Ascending aorta (tissue), 2 donors: ENCODE measurements at regions of chr11 and their contacts with region 1.

Region 1: DNA sequence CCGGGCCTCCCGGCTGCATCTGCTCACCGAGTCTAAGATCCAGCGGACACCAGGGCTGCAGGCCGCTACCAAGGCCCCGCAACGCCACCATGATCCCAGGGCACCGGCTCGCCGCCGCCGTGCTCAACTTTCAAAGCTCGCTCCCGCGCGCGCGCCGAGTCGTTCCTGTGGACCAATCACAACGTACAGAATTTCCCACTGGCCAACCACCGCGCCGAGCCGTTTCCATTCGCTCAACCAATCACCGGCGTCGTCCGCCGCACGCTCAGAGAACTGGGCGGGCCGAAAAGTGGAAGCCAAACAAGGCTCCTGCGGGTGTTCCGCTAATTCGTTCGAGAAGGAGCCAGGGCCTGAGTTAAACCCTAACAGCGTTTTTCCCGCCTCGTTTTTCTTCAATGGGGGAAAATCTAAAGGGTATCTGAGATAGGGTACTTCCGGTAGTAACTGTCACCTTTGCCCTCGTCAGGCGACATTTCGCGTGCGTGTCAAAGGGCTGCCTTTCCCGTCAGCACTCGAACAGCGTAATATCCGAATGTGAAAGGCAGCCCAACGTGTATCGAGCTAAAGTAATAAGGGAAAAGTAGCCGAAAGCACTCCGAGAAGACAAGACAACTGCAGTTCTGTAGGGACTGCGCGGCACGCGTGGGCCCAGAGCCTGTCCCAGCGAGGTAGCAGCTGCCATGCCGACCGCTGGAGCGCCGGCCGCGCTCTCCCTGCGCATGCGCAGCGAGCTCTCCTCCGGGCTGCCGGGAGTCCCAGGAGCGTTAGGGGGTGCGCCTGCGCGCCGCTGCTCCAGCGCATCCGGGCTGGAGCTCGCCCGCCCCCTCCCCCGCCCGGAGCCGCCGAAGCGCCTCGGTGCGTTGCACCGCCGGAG is at the starts of genes NCAPD3 and VPS26B:
- DNase-seq: peak; percentile 88 to 98
- H3K4me3 ChIP-seq: peak within 1 kb of the TSS; percentile 74 to 92
- H3K27ac ChIP-seq: peak within 1 kb of the TSS; percentile 86 to 91
- H3K4me1 ChIP-seq: peaks cover 19 to 27% of the 10 kb centered on the region in 2 donors
- H3K27me3 ChIP-seq: no peaks in the 10 kb centered on the region
- CTCF ChIP-seq: no peak
- total RNA-seq, gene NCAPD3: 4.8 TPM
- total RNA-seq, gene VPS26B: 18.0 TPM

Region 2: DNA sequence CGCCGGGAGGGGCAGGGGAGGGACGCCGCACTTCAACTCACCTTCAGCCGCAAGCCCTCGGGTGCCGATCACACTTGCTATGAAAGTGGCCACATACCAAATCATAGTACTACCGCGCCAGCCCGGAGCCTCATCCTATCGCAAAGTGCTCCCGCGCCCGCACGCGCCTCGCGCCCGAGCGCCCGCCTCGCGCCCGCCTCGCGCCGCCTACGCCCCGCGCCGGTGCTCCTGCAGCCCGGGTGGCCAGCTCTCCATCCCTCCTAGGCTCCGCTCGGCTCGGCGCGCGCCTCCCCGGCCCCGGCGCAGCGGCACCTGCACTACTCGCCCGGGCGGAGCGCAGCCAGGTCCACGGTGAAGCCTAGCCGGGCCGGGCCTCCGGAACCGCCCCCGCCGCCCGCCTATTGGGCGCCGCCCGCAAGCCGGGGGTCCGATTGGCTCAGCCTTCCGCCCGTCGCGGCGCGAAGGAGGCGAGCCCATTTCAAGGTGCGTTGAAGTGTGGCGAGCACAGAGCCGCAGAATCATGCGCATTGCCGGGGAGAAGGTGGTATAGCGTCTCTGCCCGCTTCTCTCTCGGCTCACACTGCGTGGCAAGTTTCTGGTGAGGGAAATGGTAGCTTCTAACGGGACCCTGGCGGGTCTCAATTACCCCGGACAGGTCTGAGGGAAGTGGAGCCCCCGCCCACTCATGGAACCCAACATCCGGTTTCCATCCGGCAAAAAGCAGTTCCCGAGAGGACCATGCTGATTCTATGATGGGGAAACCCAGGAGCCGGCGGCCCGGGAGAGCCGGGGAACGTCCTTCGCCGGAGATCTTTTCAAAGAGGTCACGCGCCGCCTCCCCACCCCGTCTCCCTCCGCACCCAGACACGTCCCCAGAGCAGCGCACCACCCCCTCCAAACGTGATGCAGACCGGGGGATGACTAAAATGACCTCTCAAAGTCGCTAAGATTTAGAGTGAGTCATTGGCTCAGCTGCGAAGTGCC is 267.1 kb before region 1 on chr11 and contains the start of gene IGSF9B:
- intact Hi-C with region 1: loop called (anchors 2 kb)
- DNase-seq: peak in 1 of 2 donors; percentile 92
- H3K4me3 ChIP-seq: peak within 1 kb of the TSS; percentile 74 to 86
- H3K27ac ChIP-seq: peak within 1 kb of the TSS; percentile 87 to 93
- H3K4me1 ChIP-seq: peaks cover 10 to 35% of the 10 kb centered on the region in 2 donors
- H3K27me3 ChIP-seq: no peaks in the 10 kb centered on the region
- CTCF ChIP-seq: peak in 1 of 3 experiments; percentile 21
- total RNA-seq, gene IGSF9B: 162 TPM

Region 3: DNA sequence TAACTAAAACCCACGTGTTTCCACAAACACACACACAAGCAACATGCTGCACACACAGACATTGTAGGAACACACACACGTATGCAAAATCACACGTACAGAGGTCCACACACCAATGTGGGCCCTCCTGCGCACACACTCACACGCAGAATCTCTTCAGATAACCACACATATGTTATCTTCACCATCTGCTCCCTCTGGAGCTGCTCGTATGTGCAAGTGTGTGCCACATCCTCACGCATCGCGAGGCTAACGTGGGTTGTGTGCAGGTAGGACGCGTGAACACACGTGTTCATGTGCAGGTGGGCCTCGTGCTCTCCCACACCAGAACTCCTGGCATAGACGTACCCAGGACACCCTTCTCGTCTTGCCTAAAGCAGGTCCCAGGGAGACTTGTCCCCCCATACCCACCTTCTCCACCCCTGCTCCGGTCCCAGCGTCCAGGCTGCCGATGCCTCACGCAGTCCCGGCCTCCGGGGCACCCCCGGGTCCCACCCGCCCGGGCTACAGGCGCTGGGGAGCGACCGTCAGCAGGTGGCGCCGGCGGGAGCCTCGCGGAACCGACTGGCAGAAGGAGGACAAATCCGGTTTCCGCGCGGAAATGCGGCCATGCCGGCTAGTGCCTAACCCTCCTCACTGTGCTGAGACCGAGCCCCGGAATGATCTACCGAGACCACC is 257.0 kb before region 1 on chr11:
- intact Hi-C with region 1: loop called (anchors 1 kb)
- DNase-seq: no peak
- H3K4me3 ChIP-seq: no peak overlapping the region
- H3K27ac ChIP-seq: no peak overlapping the region
- H3K4me1 ChIP-seq: peaks cover 4 to 13% of the 10 kb centered on the region in 2 donors
- H3K27me3 ChIP-seq: no peaks in the 10 kb centered on the region
- CTCF ChIP-seq: peak in 2 of 3 experiments; percentile 44 to 45

Region 4: GRCh38 chr11:134037046-134037908 is 186.8 kb before region 1 on chr11:
- intact Hi-C with region 1: loop called (anchors 1 kb)
- DNase-seq: peak in 1 of 2 donors; percentile 86
- H3K4me3 ChIP-seq: peak overlapping the region; percentile 58 to 70
- H3K27ac ChIP-seq: peak overlapping the region; percentile 87 to 89
- H3K4me1 ChIP-seq: peaks cover 23 to 36% of the 10 kb centered on the region in 2 donors
- H3K27me3 ChIP-seq: no peaks in the 10 kb centered on the region
- CTCF ChIP-seq: no peak

Region 5: GRCh38 chr11:134098566-134099184 is 125.4 kb before region 1 on chr11:
- intact Hi-C with region 1: no loop called
- DNase-seq: no peak
- H3K4me3 ChIP-seq: no peak overlapping the region
- H3K27ac ChIP-seq: no peak overlapping the region
- H3K4me1 ChIP-seq: no peaks in the 10 kb centered on the region
- H3K27me3 ChIP-seq: no peaks in the 10 kb centered on the region
- CTCF ChIP-seq: no peak

Region 6: GRCh38 chr11:134124660-134125451 is 99.2 kb before region 1 on chr11:
- intact Hi-C with region 1: no loop called
- DNase-seq: no peak
- H3K4me3 ChIP-seq: peak overlapping the region; percentile 56 to 70
- H3K27ac ChIP-seq: peak overlapping the region; percentile 61 to 90
- H3K4me1 ChIP-seq: peaks cover 19 to 41% of the 10 kb centered on the region in 2 donors
- H3K27me3 ChIP-seq: no peaks in the 10 kb centered on the region
- CTCF ChIP-seq: peak in 1 of 3 experiments; percentile 17

Region 7: GRCh38 chr11:134253188-134253993 is 29.3 kb after region 1 on chr11 and contains the starts of genes ACAD8 and THYN1:
- intact Hi-C with region 1: loop called (anchors 1 kb)
- DNase-seq: peak; percentile 83 to 98
- H3K4me3 ChIP-seq: peak within 1 kb of the TSS; percentile 82 to 84
- H3K27ac ChIP-seq: peak within 1 kb of the TSS; percentile 44 to 45
- H3K4me1 ChIP-seq: peaks cover 0 to 15% of the 10 kb centered on the region in 2 donors
- H3K27me3 ChIP-seq: no peaks in the 10 kb centered on the region
- CTCF ChIP-seq: peak in 2 of 3 experiments; percentile 31 to 45
- total RNA-seq, gene ACAD8: 28.6 TPM
- total RNA-seq, gene THYN1: 19.8 TPM

Region 8: GRCh38 chr11:134331354-134332188 is 107.5 kb after region 1 on chr11 and contains the start of gene GLB1L2:
- intact Hi-C with region 1: loop called (anchors 2 kb)
- DNase-seq: peak in 1 of 2 donors; percentile 80
- H3K4me3 ChIP-seq: peak within 1 kb of the TSS; percentile 58 to 61
- H3K27ac ChIP-seq: no peak within 1 kb of the TSS
- H3K4me1 ChIP-seq: peaks cover 0 to 8% of the 10 kb centered on the region in 2 donors
- H3K27me3 ChIP-seq: no peaks in the 10 kb centered on the region
- CTCF ChIP-seq: no peak
- total RNA-seq, gene GLB1L2: 1.7 TPM

Region 9: DNA sequence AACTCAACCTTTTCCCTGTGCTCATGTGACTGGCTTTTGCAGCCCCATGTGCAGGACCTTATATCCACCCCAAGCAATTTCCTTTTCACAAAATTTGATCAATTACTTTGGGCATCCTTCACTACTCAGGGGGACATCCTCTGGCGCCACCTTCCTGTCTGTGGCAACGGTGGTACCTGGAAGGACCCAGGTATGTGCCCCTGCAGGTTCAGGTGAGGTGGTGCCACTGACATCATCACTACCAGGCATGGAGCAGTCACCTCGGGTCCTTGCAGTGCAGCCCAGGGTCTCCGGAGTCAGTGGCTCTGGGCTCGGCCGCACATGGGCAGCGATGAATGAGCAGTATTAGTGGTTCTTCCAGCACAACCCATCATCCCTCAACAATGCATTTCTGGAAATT is 225.6 kb after region 1 on chr11:
- intact Hi-C with region 1: no loop called
- DNase-seq: no peak
- H3K4me3 ChIP-seq: no peak overlapping the region
- H3K27ac ChIP-seq: no peak overlapping the region
- H3K4me1 ChIP-seq: no peaks in the 10 kb centered on the region
- H3K27me3 ChIP-seq: no peaks in the 10 kb centered on the region
- CTCF ChIP-seq: no peak